ENCODE measurements at regions of chr19 and their contacts with region 1.

Region 1: DNA sequence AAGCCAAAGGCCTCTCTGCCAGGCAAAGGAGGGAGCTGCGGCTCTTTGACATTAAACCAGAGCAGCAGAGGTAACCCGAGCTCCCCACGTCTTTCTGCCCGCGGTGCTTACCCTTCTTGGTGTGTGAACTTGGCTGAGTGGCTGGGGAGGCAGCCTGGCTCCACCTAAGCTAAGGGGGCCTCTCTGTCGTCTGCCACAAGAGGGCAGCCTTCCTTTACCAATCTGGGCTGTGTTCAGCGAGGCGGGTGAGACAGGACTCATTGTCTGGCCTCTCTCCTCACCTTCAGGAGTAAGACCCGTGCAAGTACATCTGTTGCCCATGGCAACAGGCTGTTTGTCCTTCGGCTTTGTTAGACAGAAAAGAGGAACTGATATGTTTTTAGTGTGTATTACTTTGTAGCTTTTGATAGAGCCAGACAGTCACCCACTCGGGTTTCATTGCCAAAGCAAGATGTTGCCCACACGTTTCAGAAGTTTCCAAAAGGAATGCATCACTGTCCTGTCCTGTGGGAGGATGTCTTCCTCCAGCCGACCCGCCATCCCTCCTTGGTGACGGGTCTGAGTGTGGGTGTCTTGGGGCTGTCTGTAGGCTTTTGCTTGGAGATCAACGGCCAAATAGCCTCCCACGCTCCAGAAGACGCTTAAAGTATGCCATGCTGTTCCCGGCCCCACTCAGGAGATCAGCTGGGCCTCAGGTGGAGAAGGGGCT is 4.6 kb downstream of the POP4 start:
- DNase-seq: peak; percentile 90
- CTCF ChIP-seq: peak; percentile 93

Region 2: DNA sequence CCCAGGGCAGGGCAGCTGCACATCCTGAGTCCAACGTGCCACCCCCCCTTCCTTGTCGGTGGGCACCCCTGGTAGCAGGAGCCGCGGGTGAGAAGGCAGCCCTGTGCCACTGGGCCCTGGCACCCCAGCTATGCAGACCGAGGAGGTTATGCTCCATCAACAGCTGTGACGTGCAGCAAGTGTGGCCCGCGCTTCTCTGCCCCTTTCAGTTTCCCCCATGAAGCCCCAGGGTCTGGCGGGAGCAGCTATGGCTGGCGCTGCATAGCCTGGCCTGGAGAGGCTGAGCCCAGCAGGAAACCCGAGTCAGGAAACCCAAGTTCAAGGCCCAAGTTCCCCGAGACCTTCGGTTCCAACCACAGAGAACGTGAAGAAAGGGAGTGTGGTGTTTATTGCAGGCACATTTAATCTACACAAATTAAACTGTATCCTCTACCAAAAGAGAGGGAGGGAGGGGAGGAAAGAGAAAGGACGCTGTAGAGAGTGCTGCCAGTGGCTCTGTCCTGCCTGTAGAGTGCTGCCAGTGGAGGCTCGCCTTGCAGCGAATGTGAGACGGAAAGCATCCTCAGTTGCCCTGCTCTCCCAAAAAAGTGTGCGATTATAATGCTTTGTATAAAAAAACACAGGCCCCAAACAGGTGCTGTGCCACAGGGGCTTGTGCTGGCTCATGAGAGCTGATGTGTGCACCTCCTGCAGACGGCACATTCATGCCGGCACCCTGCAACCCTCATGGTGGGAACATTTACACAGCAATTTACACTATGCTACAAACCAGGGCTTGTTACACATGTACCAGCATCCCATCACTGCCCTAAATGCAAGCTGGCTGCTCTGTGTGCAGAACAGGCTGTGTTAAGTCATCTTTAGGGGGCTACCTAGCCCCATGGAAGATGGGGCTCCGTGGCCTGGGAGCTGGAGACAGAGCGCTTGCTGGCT is 11.7 kb after region 1 on chr19:
- CTCF ChIA-PET with region 1: interaction called, 83 read pairs
- POLR2A ChIA-PET with region 1: no interaction called
- DNase-seq: peak; percentile 63
- CTCF ChIP-seq: no peak

Region 3: GRCh38 chr19:29665215-29665825 is 54.6 kb after region 1 on chr19 and contains the start of gene PLEKHF1:
- CTCF ChIA-PET with region 1: interaction called, 58 read pairs
- POLR2A ChIA-PET with region 1: interaction called, 5 read pairs
- DNase-seq: peak; percentile 96
- CTCF ChIP-seq: peak; percentile 37

Region 4: DNA sequence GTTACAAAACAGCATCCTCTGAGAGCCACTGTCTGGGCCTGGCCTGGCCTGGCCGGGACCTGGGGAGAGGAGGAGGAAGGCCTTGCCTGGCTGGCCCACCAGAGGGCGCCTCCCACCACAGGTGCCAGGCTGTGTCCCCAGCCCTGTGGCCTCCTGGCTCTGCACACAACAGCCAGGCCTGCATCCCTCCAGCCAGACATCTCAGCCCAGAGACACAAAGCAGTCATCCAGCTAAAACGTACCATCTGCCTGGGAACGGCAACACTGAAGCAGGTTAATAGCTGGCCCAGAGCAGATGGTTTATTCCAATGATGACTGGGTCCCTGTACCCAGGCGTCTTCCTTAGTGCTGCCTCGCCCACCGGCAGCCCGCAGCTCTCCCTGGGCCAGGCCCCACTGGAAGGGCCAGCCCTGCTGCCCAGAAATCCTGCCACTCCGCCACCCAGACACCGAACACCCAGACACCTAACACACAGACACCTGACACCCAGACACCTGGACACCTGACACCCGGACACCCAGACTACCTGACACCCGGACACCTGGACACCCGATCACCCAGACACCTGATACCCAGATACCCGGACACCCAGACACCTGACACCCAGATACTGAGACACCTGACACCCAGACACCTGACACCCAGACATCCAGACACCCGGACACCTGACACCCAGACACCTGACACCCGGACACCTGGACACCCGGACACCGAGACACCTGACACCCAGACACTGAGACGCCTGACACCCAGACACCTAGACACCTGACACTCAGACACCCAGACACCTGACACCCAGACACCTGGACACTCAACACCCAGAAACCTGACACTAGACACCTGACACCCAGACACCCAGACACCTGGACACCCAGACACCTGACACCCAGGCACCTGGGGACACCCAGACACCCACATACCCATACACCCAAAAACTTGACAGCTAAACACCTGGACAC is 84.2 kb after region 1 on chr19:
- CTCF ChIA-PET with region 1: interaction called, 115 read pairs
- POLR2A ChIA-PET with region 1: no interaction called
- DNase-seq: peak; percentile 83
- CTCF ChIP-seq: peak; percentile 93

Region 5: DNA sequence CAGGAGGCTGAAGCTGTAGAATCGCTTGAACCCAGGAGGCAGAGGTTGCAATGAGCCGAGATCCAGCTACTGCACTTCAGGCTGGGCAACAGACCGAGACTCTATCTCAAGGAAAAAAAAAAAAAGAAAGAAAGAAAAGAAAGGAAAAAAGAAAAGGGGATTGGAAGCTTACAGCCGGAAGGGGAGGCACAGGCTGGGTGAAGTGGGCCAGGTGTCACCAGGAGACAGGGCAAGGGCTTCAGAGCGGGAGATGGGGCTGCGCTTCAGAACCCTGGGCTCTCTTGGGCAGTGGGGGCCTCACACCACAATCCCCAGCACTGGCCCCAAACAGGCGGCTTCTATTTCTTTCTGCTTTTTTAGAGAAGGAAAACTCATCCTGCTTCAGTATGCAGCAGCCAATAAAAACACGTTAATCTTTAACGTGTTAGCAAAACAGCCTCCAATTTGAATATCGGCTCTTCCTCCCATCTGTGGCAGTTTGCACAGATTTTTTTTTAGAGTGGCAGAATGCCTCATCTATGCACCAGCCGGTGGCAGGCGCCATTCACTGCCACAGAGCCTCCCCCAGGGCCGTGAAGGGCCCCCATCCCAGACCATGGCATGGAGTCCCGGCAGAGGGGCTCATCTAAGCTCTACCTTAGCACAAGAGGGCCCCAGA is 151.0 kb after region 1 on chr19:
- CTCF ChIA-PET with region 1: interaction called, 12 read pairs
- POLR2A ChIA-PET with region 1: no interaction called
- DNase-seq: no peak
- CTCF ChIP-seq: no peak